GM12878 (cell line): ENCODE measurements at regions of chr4 and their contacts with region 1.

Region 1: GRCh38 chr4:36255577-36255976 is 11.3 kb upstream of the ARAP2 start:
- DNase-seq: peak; percentile 92
- ATAC-seq: peak; percentile 87
- H3K4me3 ChIP-seq: no peak overlapping the region
- H3K27ac ChIP-seq: peak overlapping the region; percentile 85
- H3K4me1 ChIP-seq: peaks cover 11% of the 10 kb centered on the region
- H3K27me3 ChIP-seq: no peaks in the 10 kb centered on the region
- CTCF ChIP-seq: no peak
- EP300 ChIP-seq: no peak; a peak in 1 of 4 replicates
- POLR2A ChIP-seq: no peak
- RAD21 ChIP-seq: 0 out of 2 replicates have a peak, but pooled peaks have one; percentile 16

Region 2: DNA sequence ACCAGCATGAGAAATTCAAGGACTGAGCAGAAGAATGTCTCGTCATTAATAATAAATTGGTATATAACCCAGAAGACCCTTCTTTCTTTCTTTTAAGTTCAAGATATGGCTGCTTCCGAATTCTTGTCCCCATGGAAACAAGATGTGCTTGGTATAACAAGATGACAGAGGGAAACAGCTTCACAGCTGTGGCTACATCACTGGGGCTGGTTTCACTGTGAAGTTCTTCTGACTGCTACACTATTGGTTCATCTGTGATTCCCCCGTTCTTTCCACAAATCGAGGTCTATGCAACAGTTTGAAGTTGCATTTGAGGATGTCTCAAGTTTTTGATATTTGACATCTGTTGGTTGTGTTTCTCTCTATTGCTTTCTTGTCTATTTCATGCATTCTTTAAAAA is 13.5 kb after region 1 on chr4:
- CTCF ChIA-PET with region 1: interaction called, 6 read pairs
- POLR2A ChIA-PET with region 1: interaction called, 5 read pairs
- RAD21 ChIA-PET with region 1: interaction called, 4 read pairs
- SMC1A ChIA-PET with region 1: interaction called, 38 read pairs
- in situ Hi-C with region 1: no loop called
- intact Hi-C with region 1: no loop called
- DNase-seq: no peak
- ATAC-seq: peak; percentile 84
- H3K4me3 ChIP-seq: no peak overlapping the region
- H3K27ac ChIP-seq: no peak overlapping the region
- H3K4me1 ChIP-seq: no peaks in the 10 kb centered on the region
- H3K27me3 ChIP-seq: no peaks in the 10 kb centered on the region
- CTCF ChIP-seq: no peak
- EP300 ChIP-seq: no peak
- POLR2A ChIP-seq: no peak
- RAD21 ChIP-seq: no peak

Region 3: GRCh38 chr4:36280555-36280954 is 25.0 kb after region 1 on chr4:
- CTCF ChIA-PET with region 1: interaction called, 16 read pairs
- POLR2A ChIA-PET with region 1: interaction called, 7 read pairs
- RAD21 ChIA-PET with region 1: interaction called, 6 read pairs
- SMC1A ChIA-PET with region 1: interaction called, 28 read pairs
- in situ Hi-C with region 1: no loop called
- intact Hi-C with region 1: no loop called
- DNase-seq: no peak
- ATAC-seq: no peak
- H3K4me3 ChIP-seq: no peak overlapping the region
- H3K27ac ChIP-seq: no peak overlapping the region
- H3K4me1 ChIP-seq: peaks cover 5% of the 10 kb centered on the region
- H3K27me3 ChIP-seq: no peaks in the 10 kb centered on the region
- CTCF ChIP-seq: no peak
- EP300 ChIP-seq: no peak
- POLR2A ChIP-seq: no peak
- RAD21 ChIP-seq: no peak

Region 4: GRCh38 chr4:36320117-36320896 is 64.7 kb after region 1 on chr4:
- CTCF ChIA-PET with region 1: interaction called, 5 read pairs
- POLR2A ChIA-PET with region 1: no interaction called
- RAD21 ChIA-PET with region 1: interaction called, 5 read pairs
- SMC1A ChIA-PET with region 1: interaction called, 8 read pairs
- in situ Hi-C with region 1: no loop called
- intact Hi-C with region 1: loop called (anchors 2 kb)
- DNase-seq: peak; percentile 54
- ATAC-seq: peak; percentile 78
- H3K4me3 ChIP-seq: no peak overlapping the region; the same call in 1 of the 2 replicates
- H3K27ac ChIP-seq: peak overlapping the region; percentile 79
- H3K4me1 ChIP-seq: peaks cover 52% of the 10 kb centered on the region
- H3K27me3 ChIP-seq: no peaks in the 10 kb centered on the region
- CTCF ChIP-seq: no peak
- EP300 ChIP-seq: peak in 1 of 2 experiments; percentile 39; a peak in 1 of 4 replicates
- POLR2A ChIP-seq: no peak
- RAD21 ChIP-seq: peak; percentile 29; the same call in 1 of the 2 replicates